Sigmoid colon (tissue), 7 donors: ENCODE measurements at regions of chr10 and their contacts with region 1.

Region 1: GRCh38 chr10:124741281-124741921 is 2.8 kb downstream of the FAM53B start:
- DNase-seq: peak; percentile 92
- H3K4me3 ChIP-seq: peak overlapping the region in 2 of 4 donors; percentile 82
- H3K27ac ChIP-seq: peak overlapping the region; percentile 86 to 94 (median 89)
- H3K4me1 ChIP-seq: peaks cover 0 to 82% (median 76%) of the 10 kb centered on the region in 4 donors
- H3K27me3 ChIP-seq: no peaks in the 10 kb centered on the region
- CTCF ChIP-seq: peak; percentile 84 to 96 (median 90)
- EP300 ChIP-seq: no peak
- POLR2A ChIP-seq: no peak

Region 2: GRCh38 chr10:124530215-124530665 is 211.2 kb before region 1 on chr10:
- intact Hi-C with region 1: loop called (anchors 1 kb)
- DNase-seq: peak; percentile 93
- H3K4me3 ChIP-seq: no peak overlapping the region
- H3K27ac ChIP-seq: peak overlapping the region in 2 of 4 donors; percentile 54 to 58
- H3K4me1 ChIP-seq: peaks cover 0 to 31% (median 19%) of the 10 kb centered on the region in 4 donors
- H3K27me3 ChIP-seq: no peaks in the 10 kb centered on the region
- CTCF ChIP-seq: peak; percentile 88 to 95 (median 90)
- EP300 ChIP-seq: no peak
- POLR2A ChIP-seq: no peak

Region 3: DNA sequence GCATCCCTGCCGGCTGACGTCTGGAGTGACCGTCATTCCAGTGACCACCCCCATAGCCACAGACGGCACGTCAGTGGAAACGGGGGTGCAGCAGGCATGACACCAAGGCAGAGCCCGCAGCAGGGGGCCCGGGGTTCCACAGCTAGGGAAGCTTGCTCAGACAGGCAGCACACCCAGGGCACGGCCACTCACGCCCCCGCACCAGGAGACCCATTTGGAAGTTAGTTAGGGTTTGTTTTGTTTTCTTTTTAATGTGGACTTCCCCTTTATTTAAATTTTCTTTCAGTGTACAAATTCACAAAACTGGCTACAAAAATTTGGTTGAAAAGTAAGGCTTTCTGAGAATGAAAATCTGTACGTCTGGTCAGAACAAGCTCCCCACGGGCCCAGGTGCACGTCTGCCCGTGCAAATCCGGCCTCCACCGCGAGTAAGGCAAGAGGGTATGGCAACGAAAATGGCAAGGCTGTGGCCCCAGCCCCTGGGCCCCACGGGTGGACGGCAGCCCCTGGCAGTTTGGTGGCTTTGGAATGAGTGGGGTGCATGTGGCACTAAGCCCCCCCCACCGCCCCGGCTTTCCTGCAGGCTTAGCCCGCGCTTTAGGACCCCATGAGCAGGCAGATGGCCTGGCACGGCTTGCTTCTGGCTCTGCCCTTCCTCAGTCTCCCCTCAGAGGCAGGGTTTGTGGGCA is 121.5 kb before region 1 on chr10:
- intact Hi-C with region 1: loop called (anchors 5 kb)
- DNase-seq: no peak
- H3K4me3 ChIP-seq: no peak overlapping the region
- H3K27ac ChIP-seq: no peak overlapping the region
- H3K4me1 ChIP-seq: peaks cover 0 to 32% (median 22%) of the 10 kb centered on the region in 4 donors
- H3K27me3 ChIP-seq: no peaks in the 10 kb centered on the region
- CTCF ChIP-seq: no peak
- EP300 ChIP-seq: no peak
- POLR2A ChIP-seq: no peak

Region 4: DNA sequence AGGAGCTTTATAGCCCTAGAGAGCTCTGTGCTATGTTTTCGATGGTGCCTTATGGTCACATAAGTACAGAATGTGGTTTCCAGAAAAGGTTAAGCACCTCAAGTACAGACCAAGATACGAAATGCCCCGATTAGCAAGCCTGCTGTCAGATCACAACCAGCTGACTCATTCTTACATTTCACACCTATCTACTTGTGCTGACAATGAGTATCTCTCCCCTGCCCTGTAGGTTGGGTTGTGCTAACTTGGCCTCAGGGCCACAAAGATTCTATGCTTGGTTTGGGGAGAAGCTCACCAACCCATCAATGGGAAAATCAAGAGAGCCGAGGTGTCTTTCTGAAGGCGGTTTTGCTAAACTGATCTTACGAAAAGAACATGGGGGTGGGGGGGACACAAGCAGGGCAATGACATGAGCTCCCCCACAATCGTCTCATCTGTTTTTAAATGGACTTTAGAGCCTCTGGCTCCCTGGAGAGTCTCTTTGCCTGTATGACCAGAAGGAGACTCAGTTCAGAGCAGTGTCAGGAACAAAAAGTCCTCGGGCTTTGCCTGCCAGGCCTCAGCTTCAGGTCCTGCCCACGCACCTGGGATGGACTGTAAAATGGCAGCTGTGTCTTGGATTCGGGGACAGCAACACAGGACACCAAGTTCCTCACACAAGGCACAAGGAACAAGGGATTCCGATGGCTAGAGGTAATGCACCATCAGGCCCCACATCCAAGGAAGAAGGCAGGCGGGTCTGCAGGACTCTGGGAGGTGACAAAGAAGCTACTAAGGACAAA is 52.3 kb before region 1 on chr10:
- intact Hi-C with region 1: loop called (anchors 5 kb)
- DNase-seq: no peak
- H3K4me3 ChIP-seq: no peak overlapping the region
- H3K27ac ChIP-seq: no peak overlapping the region
- H3K4me1 ChIP-seq: peaks cover 0 to 52% (median 31%) of the 10 kb centered on the region in 4 donors
- H3K27me3 ChIP-seq: no peaks in the 10 kb centered on the region
- CTCF ChIP-seq: no peak
- EP300 ChIP-seq: no peak
- POLR2A ChIP-seq: no peak

Region 5: DNA sequence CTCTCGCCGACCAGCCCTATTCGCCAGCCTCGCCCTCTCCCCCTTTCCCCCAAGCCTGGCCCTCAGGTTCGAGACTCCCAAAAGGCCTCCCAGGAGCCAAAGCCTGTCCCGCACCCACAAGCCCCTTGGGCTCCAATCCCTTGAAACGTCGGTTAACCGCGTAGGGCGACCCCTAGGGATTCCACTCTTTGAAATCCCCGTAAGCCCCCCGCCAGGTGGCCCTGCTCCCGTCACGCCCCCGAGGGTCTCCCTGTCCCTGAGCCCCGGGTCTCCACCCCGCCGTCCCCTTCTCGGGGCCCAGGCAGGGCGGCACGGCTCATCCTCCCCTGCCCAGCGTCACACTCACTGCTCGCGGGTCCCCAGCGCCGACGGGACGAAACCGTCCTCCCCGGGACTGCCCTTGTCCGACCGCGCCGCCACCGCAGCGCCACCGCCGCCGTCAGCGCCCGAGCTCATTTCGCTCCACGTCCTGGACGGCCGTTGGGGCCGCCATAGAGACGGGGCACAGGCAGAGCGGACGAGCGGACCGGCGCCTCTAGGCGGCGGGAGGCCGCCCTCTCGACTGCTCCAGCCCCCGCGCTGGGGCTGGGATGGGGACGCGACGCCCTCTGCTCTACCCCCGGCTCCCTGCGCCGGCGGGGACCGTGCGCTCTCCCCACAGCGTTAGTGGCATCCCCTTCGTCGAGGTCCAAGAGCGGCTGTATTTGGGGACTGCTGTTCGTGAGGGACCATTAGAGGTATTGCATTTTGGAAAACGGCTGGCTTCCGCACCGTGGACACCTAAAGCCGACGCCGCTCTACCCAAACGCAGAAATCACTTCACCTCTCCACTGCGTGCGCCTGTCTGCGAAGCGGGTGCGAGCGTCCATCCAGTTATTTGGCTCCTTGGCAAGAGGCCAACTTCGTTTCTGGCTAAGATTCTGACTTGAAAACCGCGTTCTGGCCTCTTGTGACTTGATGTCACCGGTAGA is 50.3 kb after region 1 on chr10 and contains the start of gene EEF1AKMT2:
- intact Hi-C with region 1: loop called (anchors 5 kb)
- DNase-seq: peak; percentile 86
- H3K4me3 ChIP-seq: peak within 1 kb of the TSS; percentile 93 to 98 (median 98)
- H3K27ac ChIP-seq: peak within 1 kb of the TSS; percentile 89 to 93 (median 91)
- H3K4me1 ChIP-seq: peaks cover 0 to 17% (median 9%) of the 10 kb centered on the region in 4 donors
- H3K27me3 ChIP-seq: no peaks in the 10 kb centered on the region
- CTCF ChIP-seq: peak; percentile 36 to 72 (median 49)
- EP300 ChIP-seq: no peak
- POLR2A ChIP-seq: peak; percentile 48 to 71
- total RNA-seq, gene EEF1AKMT2: 10.0 to 19.7 (median 15.5) TPM